CD4-positive, alpha-beta memory T cell (primary cell): ENCODE measurements at regions of chr17 and their contacts with region 1.

Region 1: GRCh38 chr17:72725433-72726068 is 366.9 kb downstream of the SLC39A11 start:
- DNase-seq: peak in 4 of 5 donors; percentile 23 to 42 (median 28)
- H3K4me3 ChIP-seq: no peak overlapping the region
- H3K4me3 Mint-ChIP-seq: peak overlapping the region in 6 of 8 donors; percentile 25 to 87 (median 56)
- H3K27ac ChIP-seq: no peak overlapping the region
- H3K27ac Mint-ChIP-seq: peak overlapping the region; percentile 6 to 94 (median 31)
- H3K4me1 ChIP-seq: peaks cover 31% of the 10 kb centered on the region
- H3K4me1 Mint-ChIP-seq: peaks cover 25 to 38% (median 31%) of the 10 kb centered on the region in 4 donors
- H3K27me3 ChIP-seq: no peaks in the 10 kb centered on the region
- H3K27me3 Mint-ChIP-seq: no peaks in the 10 kb centered on the region

Region 2: DNA sequence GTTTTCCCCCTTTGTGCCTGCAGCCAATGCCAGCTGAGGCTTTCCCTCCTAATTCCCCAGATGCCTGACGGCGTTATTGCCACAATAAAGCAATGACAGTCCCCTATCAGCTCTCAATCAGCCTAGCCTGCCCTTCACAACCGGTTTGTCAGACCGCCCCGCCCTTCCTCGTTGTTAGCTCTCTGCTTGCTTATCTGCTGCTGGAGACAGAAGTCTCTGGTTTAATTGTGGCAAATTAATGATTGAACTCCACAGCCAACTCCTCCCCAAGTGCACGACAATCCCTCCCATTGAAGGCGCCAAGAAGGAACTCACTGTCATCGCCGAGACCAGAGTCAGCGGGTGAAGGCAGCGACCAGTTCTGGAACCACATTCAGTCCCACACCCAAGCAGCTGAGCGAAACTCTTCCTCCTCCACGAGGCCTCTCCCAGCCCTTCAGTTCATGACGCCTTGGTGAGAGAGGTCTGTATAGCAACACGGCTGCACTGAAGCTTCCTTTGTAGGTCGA is 107.5 kb before region 1 on chr17:
- CTCF ChIA-PET with region 1: interaction called, 14 read pairs
- POLR2A ChIA-PET with region 1: interaction called, 9 read pairs
- intact Hi-C with region 1: no loop called
- DNase-seq: peak; percentile 57 to 86 (median 63)
- H3K4me3 ChIP-seq: peak overlapping the region; percentile 11 to 39
- H3K4me3 Mint-ChIP-seq: peak overlapping the region; percentile 72 to 90 (median 82)
- H3K27ac ChIP-seq: peak overlapping the region; percentile 51
- H3K27ac Mint-ChIP-seq: peak overlapping the region; percentile 65 to 91 (median 88)
- H3K4me1 ChIP-seq: peaks cover 24% of the 10 kb centered on the region
- H3K4me1 Mint-ChIP-seq: peaks cover 15 to 37% (median 22%) of the 10 kb centered on the region in 4 donors
- H3K27me3 ChIP-seq: no peaks in the 10 kb centered on the region
- H3K27me3 Mint-ChIP-seq: peaks cover 10 to 11% of the 10 kb centered on the region in 2 donors

Region 3: DNA sequence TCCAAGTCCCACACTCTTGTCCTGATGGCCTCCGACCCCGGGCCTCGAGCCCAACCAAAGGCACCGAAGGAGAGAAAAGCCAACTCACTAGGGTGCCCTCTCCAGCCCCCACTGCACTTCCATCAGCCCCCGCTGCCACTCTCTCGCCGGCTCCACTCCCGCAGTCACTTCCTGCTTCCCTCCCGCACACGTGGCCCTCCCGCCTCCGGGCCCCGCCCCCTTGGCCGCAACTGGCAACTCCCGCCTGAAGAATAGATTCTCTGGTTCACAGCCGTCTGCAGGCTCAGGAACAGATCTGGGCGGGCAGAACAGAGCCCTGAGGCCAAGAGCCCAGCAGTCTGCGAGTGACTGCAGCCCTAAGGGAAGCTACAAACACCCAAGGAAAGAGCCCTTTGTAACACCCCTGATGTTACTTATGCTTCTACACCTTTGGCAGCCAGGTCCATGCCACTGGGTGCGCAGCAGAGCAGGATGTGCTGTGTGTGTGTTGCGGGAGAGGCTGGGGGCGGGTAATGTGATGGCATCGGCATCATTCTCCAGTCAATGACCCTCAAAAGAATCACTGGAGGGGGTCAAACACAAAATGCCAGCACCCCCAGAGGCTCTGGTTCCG is 367.1 kb after region 1 on chr17 and contains the start of gene SLC39A11:
- CTCF ChIA-PET with region 1: interaction called, 7 read pairs
- POLR2A ChIA-PET with region 1: interaction called, 8 read pairs
- intact Hi-C with region 1: loop called (anchors 5 kb)
- DNase-seq: peak; percentile 87 to 93 (median 89)
- H3K4me3 ChIP-seq: peak within 1 kb of the TSS; percentile 26 to 55
- H3K4me3 Mint-ChIP-seq: peak within 1 kb of the TSS; percentile 90 to 99 (median 97)
- H3K27ac ChIP-seq: peak within 1 kb of the TSS; percentile 58
- H3K27ac Mint-ChIP-seq: peak within 1 kb of the TSS; percentile 62 to 98 (median 96)
- H3K4me1 ChIP-seq: peaks cover 27% of the 10 kb centered on the region
- H3K4me1 Mint-ChIP-seq: peaks cover 17 to 41% (median 29%) of the 10 kb centered on the region in 4 donors
- H3K27me3 ChIP-seq: no peaks in the 10 kb centered on the region
- H3K27me3 Mint-ChIP-seq: peaks cover 0 to 3% of the 10 kb centered on the region in 2 donors
- total RNA-seq, gene SLC39A11: 20.8 to 23.7 TPM

Region 4: DNA sequence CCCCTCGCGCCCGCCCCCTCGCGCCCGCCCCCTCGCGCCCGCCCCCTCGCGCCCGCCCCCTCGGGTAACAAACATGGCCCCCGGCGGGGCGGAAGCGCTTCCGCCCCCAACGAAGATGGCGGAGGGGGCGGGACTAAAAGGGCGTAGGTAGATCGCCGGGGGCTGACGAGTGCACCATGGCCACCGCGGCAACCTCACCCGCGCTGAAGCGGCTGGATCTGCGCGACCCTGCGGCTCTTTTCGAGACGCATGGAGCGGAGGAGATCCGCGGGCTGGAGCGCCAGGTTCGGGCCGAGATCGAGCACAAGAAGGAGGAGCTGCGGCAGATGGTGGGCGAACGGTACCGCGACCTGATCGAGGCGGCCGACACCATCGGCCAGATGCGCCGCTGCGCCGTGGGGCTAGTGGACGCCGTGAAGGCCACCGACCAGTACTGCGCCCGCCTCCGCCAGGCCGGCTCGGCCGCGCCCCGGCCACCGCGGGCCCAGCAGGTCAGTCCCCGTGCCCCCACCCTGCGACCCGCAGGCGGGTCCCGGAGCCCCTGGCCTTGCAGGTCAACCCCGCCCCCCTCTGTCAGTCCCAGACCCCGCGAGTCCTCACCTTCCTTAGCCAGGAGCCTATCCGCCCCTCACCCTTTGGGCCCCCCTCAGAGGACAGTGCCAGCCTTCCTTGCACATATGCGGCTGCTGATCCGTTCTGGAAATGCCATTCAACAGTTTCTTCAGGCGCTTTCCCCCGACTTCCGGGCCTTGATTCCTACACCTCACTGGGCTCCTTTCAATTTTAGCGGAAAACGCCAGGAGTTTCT is 467.5 kb after region 1 on chr17 and contains the start of gene COG1:
- CTCF ChIA-PET with region 1: interaction called, 70 read pairs
- POLR2A ChIA-PET with region 1: interaction called, 6 read pairs
- intact Hi-C with region 1: loop called (anchors 1 kb)
- DNase-seq: peak; percentile 68 to 91 (median 76)
- H3K4me3 ChIP-seq: peak within 1 kb of the TSS; percentile 71 to 84
- H3K4me3 Mint-ChIP-seq: peak within 1 kb of the TSS; percentile 97 to 99 (median 98)
- H3K27ac ChIP-seq: peak within 1 kb of the TSS; percentile 81
- H3K27ac Mint-ChIP-seq: peak within 1 kb of the TSS; percentile 79 to 99 (median 98)
- H3K4me1 ChIP-seq: peaks cover 22% of the 10 kb centered on the region
- H3K4me1 Mint-ChIP-seq: peaks cover 21 to 45% (median 28%) of the 10 kb centered on the region in 4 donors
- H3K27me3 ChIP-seq: no peaks in the 10 kb centered on the region
- H3K27me3 Mint-ChIP-seq: no peaks in the 10 kb centered on the region
- total RNA-seq, gene COG1: 76.2 to 81.6 TPM

Region 5: DNA sequence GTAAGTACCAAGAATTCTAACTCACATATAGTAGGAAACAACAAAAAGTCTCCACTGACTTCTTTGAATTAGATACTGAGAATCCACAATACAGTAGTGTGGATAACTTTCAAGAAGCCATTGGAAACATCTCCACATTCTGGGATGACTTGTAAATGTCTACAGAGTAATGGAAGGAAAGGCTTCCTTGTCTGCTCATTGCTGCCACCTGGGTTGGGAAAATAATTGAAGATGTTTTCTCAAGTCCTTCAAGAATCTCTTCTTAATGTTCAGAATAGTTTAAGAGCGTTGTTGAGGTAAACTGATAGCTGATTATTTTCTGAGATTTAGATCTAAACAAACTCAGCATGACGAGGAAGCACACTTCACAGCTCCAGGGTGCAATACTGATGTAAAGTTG is 522.2 kb after region 1 on chr17:
- CTCF ChIA-PET with region 1: interaction called, 10 read pairs
- POLR2A ChIA-PET with region 1: interaction called, 3 read pairs
- intact Hi-C with region 1: no loop called
- DNase-seq: no peak
- H3K4me3 ChIP-seq: no peak overlapping the region
- H3K4me3 Mint-ChIP-seq: no peak overlapping the region
- H3K27ac ChIP-seq: no peak overlapping the region
- H3K27ac Mint-ChIP-seq: no peak overlapping the region
- H3K4me1 ChIP-seq: no peaks in the 10 kb centered on the region
- H3K4me1 Mint-ChIP-seq: no peaks in the 10 kb centered on the region
- H3K27me3 ChIP-seq: no peaks in the 10 kb centered on the region
- H3K27me3 Mint-ChIP-seq: no peaks in the 10 kb centered on the region

Region 6: DNA sequence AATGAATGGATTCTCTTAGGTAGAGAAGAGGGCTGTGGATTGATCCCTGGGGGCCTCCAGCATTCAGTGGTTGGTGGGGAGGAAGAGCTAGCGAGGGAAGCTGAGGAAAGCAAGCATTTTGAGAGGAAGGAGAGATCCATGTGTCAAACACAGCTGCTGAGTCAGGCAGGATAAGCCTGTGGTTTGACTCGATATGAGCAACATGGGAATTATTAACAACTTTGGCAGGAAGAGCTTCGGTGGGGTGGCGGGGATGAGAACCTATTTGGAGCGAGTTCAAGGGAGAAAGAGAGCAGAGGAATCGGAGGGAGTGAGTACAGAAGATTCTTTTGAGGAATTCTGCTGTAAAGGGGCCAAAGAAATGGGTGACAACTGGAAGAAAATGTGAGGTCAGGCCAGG is 645.7 kb after region 1 on chr17:
- CTCF ChIA-PET with region 1: interaction called, 206 read pairs
- POLR2A ChIA-PET with region 1: interaction called, 5 read pairs
- intact Hi-C with region 1: loop called (anchors 1 kb)
- DNase-seq: no peak
- H3K4me3 ChIP-seq: no peak overlapping the region
- H3K4me3 Mint-ChIP-seq: no peak overlapping the region
- H3K27ac ChIP-seq: no peak overlapping the region
- H3K27ac Mint-ChIP-seq: peak overlapping the region in 1 of 7 donors; percentile 28
- H3K4me1 ChIP-seq: no peaks in the 10 kb centered on the region
- H3K4me1 Mint-ChIP-seq: no peaks in the 10 kb centered on the region
- H3K27me3 ChIP-seq: no peaks in the 10 kb centered on the region
- H3K27me3 Mint-ChIP-seq: peaks cover 9 to 14% of the 10 kb centered on the region in 2 donors